GM13977 (cell line): ENCODE measurements at regions of chr20 and their contacts with region 1.

Region 1: GRCh38 chr20:44388466-44389023 is 33.0 kb downstream of the HNF4A start:
- DNase-seq: peak; percentile 86
- CTCF ChIP-seq: peak; percentile 91

Region 2: GRCh38 chr20:44609511-44610312 is 221.2 kb after region 1 on chr20:
- in situ Hi-C with region 1: loop called (anchors 25 kb)
- DNase-seq: peak; percentile 82
- CTCF ChIP-seq: peak; percentile 98